ENCODE measurements at regions of chr4 and their contacts with region 1.

Region 1: GRCh38 chr4:119041951-119042560 is 93.6 kb upstream of the MYOZ2 start:
- DNase-seq: peak; percentile 65
- CTCF ChIP-seq: peak; percentile 45

Region 2: GRCh38 chr4:118918388-118918787 is 123.7 kb before region 1 on chr4:
- CTCF ChIA-PET with region 1: no interaction called
- POLR2A ChIA-PET with region 1: no interaction called
- DNase-seq: no peak
- CTCF ChIP-seq: no peak

Region 3: DNA sequence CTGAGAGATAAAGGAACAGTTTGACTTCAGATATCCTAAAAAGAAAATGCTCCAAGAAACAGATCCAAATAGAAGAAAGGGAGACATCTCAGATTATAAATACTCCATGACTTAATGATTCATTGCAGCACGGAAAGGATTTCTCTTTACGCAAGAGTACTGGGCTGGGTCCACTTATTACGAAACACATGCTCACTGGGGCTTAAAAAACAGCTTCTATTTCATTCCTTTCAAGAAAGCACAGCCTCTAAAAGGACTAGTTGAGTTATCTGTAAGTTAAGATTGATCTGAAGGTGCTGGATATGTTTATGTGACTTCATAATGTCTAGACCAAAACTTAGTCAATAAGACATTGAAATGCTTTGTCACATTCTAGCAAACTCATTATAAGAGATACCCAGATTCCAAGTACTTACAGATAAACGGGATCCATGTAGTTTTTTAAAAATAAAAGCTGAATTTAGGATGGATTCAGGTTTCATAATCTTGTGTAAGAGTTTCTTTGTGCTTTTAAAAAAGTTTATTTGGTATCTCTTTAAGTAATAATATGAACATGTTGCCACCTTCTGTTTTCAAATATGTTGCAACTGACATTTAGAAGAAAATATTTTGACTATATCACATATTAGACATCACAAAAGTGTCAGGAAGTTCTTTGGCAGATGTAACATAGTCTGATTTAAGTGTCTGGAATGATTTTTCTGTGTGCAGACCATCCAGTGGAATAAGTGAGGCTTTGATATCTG is 16.0 kb before region 1 on chr4:
- CTCF ChIA-PET with region 1: interaction called, 103 read pairs
- POLR2A ChIA-PET with region 1: no interaction called
- DNase-seq: no peak
- CTCF ChIP-seq: no peak

Region 4: GRCh38 chr4:119212234-119212963 is 170.3 kb after region 1 on chr4 and contains the start of gene USP53:
- CTCF ChIA-PET with region 1: no interaction called
- POLR2A ChIA-PET with region 1: no interaction called
- DNase-seq: peak; percentile 96
- CTCF ChIP-seq: no peak

Region 5: DNA sequence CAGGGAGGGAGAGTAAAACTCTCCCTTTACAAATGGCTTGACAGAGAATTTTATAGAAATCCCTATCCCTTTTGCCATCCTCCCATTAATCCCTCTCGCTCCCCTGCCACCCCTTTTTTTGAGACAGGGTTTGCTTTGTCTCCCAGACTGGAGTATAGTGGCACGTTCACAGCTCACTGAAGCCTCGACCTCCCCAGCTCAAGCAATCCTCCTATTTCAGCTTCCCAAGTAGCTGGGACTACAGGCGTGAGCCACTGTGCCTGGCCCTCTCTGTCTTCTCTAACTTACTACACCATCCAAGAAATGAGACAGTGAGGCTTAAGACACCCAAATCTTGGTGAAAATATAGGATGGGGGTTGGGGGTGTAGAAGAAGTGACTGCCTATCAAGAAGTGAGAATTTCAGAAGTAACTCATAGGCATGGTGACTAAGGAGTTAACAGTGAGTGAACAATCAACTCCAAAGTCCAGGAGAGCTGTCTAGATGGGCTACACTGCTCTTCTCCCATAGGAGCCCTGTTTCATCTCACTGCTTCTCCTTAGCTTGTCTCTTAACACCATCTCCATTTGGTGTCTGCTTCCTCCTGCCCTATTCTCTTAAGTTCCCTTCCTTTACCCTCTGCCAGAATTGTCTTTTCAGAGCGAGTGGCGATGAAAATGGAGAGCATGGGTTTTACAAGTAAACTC is 257.1 kb after region 1 on chr4:
- CTCF ChIA-PET with region 1: interaction called, 10 read pairs
- POLR2A ChIA-PET with region 1: no interaction called
- DNase-seq: peak; percentile 12
- CTCF ChIP-seq: no peak

Measured in GM10248 (cell line).